Activated CD4-positive, alpha-beta memory T cell treated with anti-CD3 and anti-CD28 coated beads for 36 hours (primary cell): ENCODE measurements at regions of chr5 and their contacts with region 1.

Region 1: DNA sequence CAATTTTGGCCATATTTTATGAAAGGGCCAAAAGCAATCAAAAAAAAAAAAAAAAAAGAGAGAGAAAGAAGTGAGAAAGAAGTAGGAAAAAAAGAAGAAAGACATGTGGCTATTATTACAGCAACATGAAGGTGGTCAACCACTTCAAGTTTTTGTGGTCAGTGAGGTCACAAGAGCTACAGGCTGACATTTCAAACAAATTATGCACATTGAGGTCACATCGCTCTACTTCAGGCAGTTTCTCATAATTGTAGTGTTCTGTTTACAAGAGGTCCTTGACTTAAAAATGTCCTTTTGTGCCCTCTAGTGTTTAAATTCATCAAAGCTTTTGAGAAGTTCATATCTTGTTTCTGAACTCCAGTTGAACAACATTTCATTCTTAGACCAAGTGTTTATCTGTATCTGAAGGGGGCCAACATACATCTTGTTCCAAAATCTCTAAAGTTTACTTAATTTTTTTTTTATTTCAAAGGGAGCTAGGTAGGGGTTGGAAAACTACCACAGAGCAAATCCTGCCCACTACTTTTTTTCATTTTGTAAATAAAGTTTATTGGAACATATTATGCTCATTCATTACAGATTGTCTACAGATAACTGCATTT is 513.1 kb downstream of the PDE4D start:
- DNase-seq: peak; percentile 24
- H3K4me3 Mint-ChIP-seq: no peak overlapping the region
- H3K27ac Mint-ChIP-seq: no peak overlapping the region
- H3K4me1 Mint-ChIP-seq: no peaks in the 10 kb centered on the region
- H3K27me3 Mint-ChIP-seq: no peaks in the 10 kb centered on the region

Region 2: DNA sequence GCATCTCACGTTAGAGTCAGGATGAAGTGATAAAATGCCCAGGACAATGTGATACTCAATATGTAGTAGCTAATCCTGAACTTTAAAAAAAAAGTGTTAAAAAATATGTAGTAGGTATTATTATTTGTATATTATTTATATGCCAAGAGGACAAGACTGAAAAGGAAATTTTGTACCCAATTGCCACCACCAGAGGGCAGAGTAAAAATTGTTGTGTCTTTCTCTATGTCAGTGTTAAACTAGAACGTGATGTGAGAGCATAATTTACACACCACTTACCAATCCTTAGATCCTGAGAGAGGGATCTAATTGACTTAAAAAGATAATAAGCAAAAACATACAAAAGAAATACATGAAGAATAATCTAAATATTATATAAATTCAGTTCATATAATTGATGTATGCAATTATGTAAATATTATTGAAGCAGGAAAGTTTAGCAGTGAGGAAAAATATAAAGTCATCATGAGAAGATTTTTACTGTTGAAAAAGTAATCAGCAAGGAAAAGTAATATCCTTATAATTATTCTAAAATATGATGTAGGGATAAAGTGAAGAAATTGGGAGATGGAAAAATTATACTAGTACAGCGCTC is 508.7 kb before region 1 on chr5:
- CTCF ChIA-PET with region 1: interaction called, 3 read pairs
- POLR2A ChIA-PET with region 1: no interaction called
- intact Hi-C with region 1: loop called (anchors 5 kb)
- DNase-seq: no peak
- H3K4me3 Mint-ChIP-seq: no peak overlapping the region
- H3K27ac Mint-ChIP-seq: no peak overlapping the region
- H3K4me1 Mint-ChIP-seq: no peaks in the 10 kb centered on the region
- H3K27me3 Mint-ChIP-seq: peaks cover 12% of the 10 kb centered on the region

Region 3: GRCh38 chr5:59218424-59219045 is 161.9 kb before region 1 on chr5:
- CTCF ChIA-PET with region 1: interaction called, 16 read pairs
- POLR2A ChIA-PET with region 1: no interaction called
- intact Hi-C with region 1: no loop called
- DNase-seq: no peak
- H3K4me3 Mint-ChIP-seq: no peak overlapping the region
- H3K27ac Mint-ChIP-seq: no peak overlapping the region
- H3K4me1 Mint-ChIP-seq: no peaks in the 10 kb centered on the region
- H3K27me3 Mint-ChIP-seq: peaks cover 26% of the 10 kb centered on the region